CD4-positive, alpha-beta memory T cell (primary cell): ENCODE measurements at regions of chr1 and their contacts with region 1.

Region 1: GRCh38 chr1:64823691-64824476 is 79.0 kb downstream of the RAVER2 start:
- DNase-seq: peak; percentile 59 to 68 (median 63)
- H3K4me3 ChIP-seq: no peak overlapping the region
- H3K4me3 Mint-ChIP-seq: peak overlapping the region in 5 of 8 donors; percentile 44 to 66 (median 54)
- H3K27ac ChIP-seq: no peak overlapping the region
- H3K27ac Mint-ChIP-seq: peak overlapping the region in 5 of 7 donors; percentile 13 to 82 (median 52)
- H3K4me1 ChIP-seq: peaks cover 22% of the 10 kb centered on the region
- H3K4me1 Mint-ChIP-seq: peaks cover 21 to 35% (median 30%) of the 10 kb centered on the region in 4 donors
- H3K27me3 ChIP-seq: no peaks in the 10 kb centered on the region
- H3K27me3 Mint-ChIP-seq: no peaks in the 10 kb centered on the region

Region 2: GRCh38 chr1:64268653-64269557 is 555.0 kb before region 1 on chr1:
- CTCF ChIA-PET with region 1: interaction called, 22 read pairs
- POLR2A ChIA-PET with region 1: no interaction called
- intact Hi-C with region 1: loop called (anchors 1 kb)
- DNase-seq: peak; percentile 47 to 62 (median 54)
- H3K4me3 ChIP-seq: no peak overlapping the region
- H3K4me3 Mint-ChIP-seq: no peak overlapping the region
- H3K27ac ChIP-seq: no peak overlapping the region
- H3K27ac Mint-ChIP-seq: peak overlapping the region in 1 of 7 donors; percentile 26
- H3K4me1 ChIP-seq: no peaks in the 10 kb centered on the region
- H3K4me1 Mint-ChIP-seq: no peaks in the 10 kb centered on the region
- H3K27me3 ChIP-seq: peaks cover 4% of the 10 kb centered on the region
- H3K27me3 Mint-ChIP-seq: peaks cover 9 to 22% of the 10 kb centered on the region in 2 donors

Region 3: DNA sequence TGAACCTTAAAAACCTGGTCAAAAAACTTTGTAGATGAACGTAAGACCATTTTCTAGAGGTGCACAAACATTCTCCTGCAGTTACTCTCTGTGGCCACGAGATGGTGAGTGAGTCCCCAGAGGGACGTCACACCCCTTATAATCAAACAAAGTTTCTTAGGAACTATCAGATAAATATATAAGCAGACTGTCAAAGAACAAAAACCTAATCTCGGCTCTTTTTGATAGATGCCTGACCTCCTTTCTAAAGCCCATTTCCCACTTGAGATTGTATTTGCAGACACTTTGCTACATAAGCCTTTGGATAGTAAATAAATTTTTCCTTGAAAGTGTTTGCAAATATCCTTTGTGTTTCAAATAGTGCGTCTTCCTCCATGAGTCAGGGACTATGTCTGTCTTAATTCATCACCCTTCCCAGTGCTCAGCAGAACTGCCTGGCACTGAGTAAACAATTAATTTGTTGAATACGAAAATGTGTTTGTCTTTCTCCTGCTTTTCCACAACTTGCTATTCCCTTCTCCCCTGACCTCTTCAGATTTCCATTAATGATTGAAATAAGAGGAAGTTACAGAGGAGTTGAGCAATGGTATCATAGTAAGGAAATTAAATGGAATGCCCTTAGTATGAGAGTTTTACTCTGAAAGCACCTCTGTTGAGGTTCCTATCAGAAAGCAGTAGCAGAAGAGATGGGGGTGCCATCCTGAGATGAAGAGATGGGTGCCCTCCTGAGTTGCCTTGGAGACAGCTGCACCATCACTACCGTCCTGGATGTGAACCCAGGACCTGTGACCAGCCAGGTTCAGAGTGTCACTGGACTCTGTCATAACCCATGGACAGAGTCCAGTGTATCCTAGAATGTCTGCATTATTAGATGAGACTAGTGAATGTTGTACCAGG is 136.8 kb before region 1 on chr1:
- CTCF ChIA-PET with region 1: interaction called, 45 read pairs
- POLR2A ChIA-PET with region 1: no interaction called
- intact Hi-C with region 1: loop called (anchors 1 kb)
- DNase-seq: peak; percentile 38 to 47 (median 40)
- H3K4me3 ChIP-seq: no peak overlapping the region
- H3K4me3 Mint-ChIP-seq: no peak overlapping the region
- H3K27ac ChIP-seq: no peak overlapping the region
- H3K27ac Mint-ChIP-seq: no peak overlapping the region
- H3K4me1 ChIP-seq: no peaks in the 10 kb centered on the region
- H3K4me1 Mint-ChIP-seq: no peaks in the 10 kb centered on the region
- H3K27me3 ChIP-seq: no peaks in the 10 kb centered on the region
- H3K27me3 Mint-ChIP-seq: peaks cover 0 to 5% of the 10 kb centered on the region in 2 donors

Region 4: GRCh38 chr1:64744492-64745180 is 79.2 kb before region 1 on chr1 and contains the start of gene RAVER2:
- CTCF ChIA-PET with region 1: interaction called, 10 read pairs
- POLR2A ChIA-PET with region 1: interaction called, 3 read pairs
- intact Hi-C with region 1: loop called (anchors 1 kb)
- DNase-seq: peak; percentile 53 to 75 (median 62)
- H3K4me3 ChIP-seq: peak within 1 kb of the TSS; percentile 17 to 54
- H3K4me3 Mint-ChIP-seq: peak within 1 kb of the TSS; percentile 87 to 94 (median 92)
- H3K27ac ChIP-seq: peak within 1 kb of the TSS; percentile 43
- H3K27ac Mint-ChIP-seq: peak within 1 kb of the TSS; percentile 77 to 90 (median 82)
- H3K4me1 ChIP-seq: peaks cover 13% of the 10 kb centered on the region
- H3K4me1 Mint-ChIP-seq: peaks cover 9 to 30% (median 22%) of the 10 kb centered on the region in 4 donors
- H3K27me3 ChIP-seq: peaks cover 3% of the 10 kb centered on the region
- H3K27me3 Mint-ChIP-seq: peaks cover 2 to 3% of the 10 kb centered on the region in 2 donors
- total RNA-seq, gene RAVER2: 1.7 to 2.1 TPM

Region 5: DNA sequence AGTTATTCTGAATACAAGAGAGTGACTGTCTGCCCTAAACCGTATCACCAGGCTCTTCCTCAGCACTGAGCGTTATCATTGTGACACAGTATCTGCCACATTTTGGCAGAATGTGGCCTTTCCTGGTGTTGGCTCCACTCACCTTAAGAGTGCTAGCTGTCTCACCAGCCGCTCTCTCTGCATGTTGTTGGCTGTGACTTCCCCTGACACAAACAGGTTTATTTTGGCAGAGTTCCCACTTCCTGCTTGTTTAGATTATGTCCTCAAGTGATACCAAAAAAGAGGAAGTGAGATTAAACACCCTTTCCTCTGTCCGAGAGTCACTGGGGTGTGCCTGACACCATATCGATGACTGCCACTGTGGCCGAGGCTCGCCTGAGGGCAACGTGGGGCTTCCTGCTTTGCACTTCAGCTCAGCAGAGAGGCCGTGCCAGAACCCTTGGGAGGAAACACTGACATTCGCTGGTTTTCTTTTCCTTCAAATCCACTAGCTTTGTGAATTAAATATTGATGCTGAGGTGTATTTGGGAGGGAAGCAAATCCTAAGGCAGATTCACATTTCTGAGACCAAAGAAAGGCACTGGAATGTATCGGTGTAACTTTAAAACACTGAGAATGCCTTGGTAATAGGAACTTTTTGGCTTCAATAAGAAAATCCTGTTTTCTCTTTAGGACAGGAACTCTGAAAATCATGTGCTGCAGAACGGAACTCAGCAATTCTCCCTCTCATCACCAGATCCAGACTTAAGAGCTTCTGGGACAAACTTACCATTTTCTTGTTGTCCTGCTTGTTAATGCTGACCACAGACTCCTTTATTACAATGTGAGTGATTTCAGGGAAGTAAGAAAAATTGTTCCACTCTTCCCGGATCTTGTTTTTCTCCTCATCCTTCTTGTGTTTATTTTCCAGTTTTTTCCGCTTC is 40.4 kb after region 1 on chr1:
- CTCF ChIA-PET with region 1: interaction called, 4 read pairs
- POLR2A ChIA-PET with region 1: no interaction called
- intact Hi-C with region 1: loop called (anchors 2 kb)
- DNase-seq: peak; percentile 71 to 77 (median 73)
- H3K4me3 ChIP-seq: no peak overlapping the region
- H3K4me3 Mint-ChIP-seq: peak overlapping the region in 7 of 8 donors; percentile 7 to 79 (median 64)
- H3K27ac ChIP-seq: peak overlapping the region; percentile 48
- H3K27ac Mint-ChIP-seq: peak overlapping the region; percentile 63 to 93 (median 89)
- H3K4me1 ChIP-seq: peaks cover 29% of the 10 kb centered on the region
- H3K4me1 Mint-ChIP-seq: peaks cover 30 to 58% (median 46%) of the 10 kb centered on the region in 4 donors
- H3K27me3 ChIP-seq: no peaks in the 10 kb centered on the region
- H3K27me3 Mint-ChIP-seq: no peaks in the 10 kb centered on the region

Region 6: DNA sequence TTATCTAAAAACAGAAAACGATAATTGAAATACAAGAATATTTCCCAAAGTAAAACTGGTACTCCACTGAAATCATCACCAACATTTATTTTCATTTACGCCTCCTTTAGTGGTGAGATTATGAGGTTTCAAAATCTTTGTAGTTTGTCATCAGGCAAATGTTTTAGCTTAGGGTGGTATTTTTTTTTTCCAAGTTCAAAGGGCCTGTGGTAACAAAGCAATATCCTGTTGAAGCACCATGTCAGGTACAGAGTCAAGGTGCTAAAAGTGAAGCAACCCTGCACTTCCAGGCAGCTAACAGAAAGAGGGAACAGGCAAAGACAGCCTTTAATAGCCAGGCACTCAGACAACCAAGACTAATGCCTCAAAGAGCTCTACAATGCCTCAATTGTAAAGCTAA is 53.3 kb after region 1 on chr1:
- CTCF ChIA-PET with region 1: interaction called, 3 read pairs
- POLR2A ChIA-PET with region 1: interaction called, 3 read pairs
- intact Hi-C with region 1: loop called (anchors 5 kb)
- DNase-seq: peak; percentile 76 to 90 (median 87)
- H3K4me3 ChIP-seq: no peak overlapping the region
- H3K4me3 Mint-ChIP-seq: peak overlapping the region; percentile 65 to 87 (median 82)
- H3K27ac ChIP-seq: peak overlapping the region; percentile 31
- H3K27ac Mint-ChIP-seq: peak overlapping the region; percentile 86 to 96 (median 94)
- H3K4me1 ChIP-seq: peaks cover 59% of the 10 kb centered on the region
- H3K4me1 Mint-ChIP-seq: peaks cover 60 to 89% (median 74%) of the 10 kb centered on the region in 4 donors
- H3K27me3 ChIP-seq: no peaks in the 10 kb centered on the region
- H3K27me3 Mint-ChIP-seq: no peaks in the 10 kb centered on the region

Region 7: DNA sequence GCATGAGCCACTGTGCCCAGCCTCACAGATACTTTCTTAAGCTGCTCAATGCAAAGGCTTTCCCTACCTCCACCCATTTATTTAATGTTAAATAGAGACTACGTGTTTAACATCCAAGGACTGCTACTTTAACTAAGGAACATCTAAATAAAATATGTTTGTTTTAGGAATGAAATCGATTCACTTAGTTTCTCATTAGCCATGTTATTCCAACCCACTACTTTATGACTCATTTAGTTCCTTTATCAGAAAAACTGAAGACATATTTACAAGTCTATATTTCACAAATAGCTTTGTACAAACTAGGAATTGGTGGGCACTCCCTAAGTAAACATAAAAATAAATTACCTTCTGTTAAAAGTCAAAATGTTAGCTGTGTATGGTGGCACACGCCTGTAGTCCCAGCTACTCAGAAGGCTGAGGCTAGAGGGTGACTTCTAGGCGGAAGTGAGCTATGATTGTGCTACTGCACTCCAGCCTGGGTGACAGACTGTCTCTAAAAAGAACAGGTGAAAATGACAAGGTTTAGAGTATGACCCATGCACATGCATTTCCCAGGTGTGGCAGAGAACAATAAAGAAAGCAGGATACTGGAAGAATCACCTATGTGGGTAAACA is 284.2 kb after region 1 on chr1:
- CTCF ChIA-PET with region 1: no interaction called
- POLR2A ChIA-PET with region 1: no interaction called
- intact Hi-C with region 1: no loop called
- DNase-seq: no peak
- H3K4me3 ChIP-seq: no peak overlapping the region
- H3K4me3 Mint-ChIP-seq: no peak overlapping the region
- H3K27ac ChIP-seq: no peak overlapping the region
- H3K27ac Mint-ChIP-seq: no peak overlapping the region
- H3K4me1 ChIP-seq: no peaks in the 10 kb centered on the region
- H3K4me1 Mint-ChIP-seq: no peaks in the 10 kb centered on the region
- H3K27me3 ChIP-seq: no peaks in the 10 kb centered on the region
- H3K27me3 Mint-ChIP-seq: peaks cover 11 to 15% of the 10 kb centered on the region in 2 donors